ENCODE measurements at regions of chr20 and their contacts with region 1.

Region 1: GRCh38 chr20:61271312-61272221 is 19.5 kb downstream of the CDH4 start:
- DNase-seq: no peak
- ATAC-seq: no peak
- H3K4me3 ChIP-seq: no peak overlapping the region
- H3K4me3 Mint-ChIP-seq: no peak overlapping the region
- H3K27ac ChIP-seq: no peak overlapping the region
- H3K27ac Mint-ChIP-seq: no peak overlapping the region
- H3K4me1 ChIP-seq: no peaks in the 10 kb centered on the region
- H3K4me1 Mint-ChIP-seq: no peaks in the 10 kb centered on the region
- H3K27me3 ChIP-seq: no peaks in the 10 kb centered on the region
- H3K27me3 Mint-ChIP-seq: peaks cover 14% of the 10 kb centered on the region
- CTCF ChIP-seq: no peak

Region 2: DNA sequence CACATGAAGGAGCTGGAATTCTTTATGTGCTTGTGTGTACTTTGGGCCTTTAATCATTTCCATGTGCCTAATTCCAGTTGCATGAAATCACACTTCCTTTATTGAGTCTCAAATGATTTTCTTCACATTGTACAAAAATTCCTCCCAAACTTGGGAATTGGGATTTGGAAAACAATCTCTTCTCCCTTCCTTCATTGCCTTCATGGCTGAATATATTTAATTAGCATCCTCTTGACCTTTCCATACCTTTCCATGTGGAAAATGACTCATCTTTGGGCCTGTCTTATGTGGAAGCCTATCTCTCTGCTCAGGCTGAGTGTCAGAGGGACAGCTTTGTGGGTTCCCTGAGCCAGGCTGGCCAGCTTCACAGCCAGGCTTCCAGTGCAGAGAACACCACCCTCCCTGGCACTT is 52.5 kb before region 1 on chr20:
- CTCF ChIA-PET with region 1: no interaction called
- POLR2A ChIA-PET with region 1: no interaction called
- intact Hi-C with region 1: loop called in 1 of 2 experiments (anchors 10 kb)
- DNase-seq: no peak
- ATAC-seq: no peak
- H3K4me3 ChIP-seq: no peak overlapping the region
- H3K4me3 Mint-ChIP-seq: no peak overlapping the region
- H3K27ac ChIP-seq: no peak overlapping the region
- H3K27ac Mint-ChIP-seq: no peak overlapping the region
- H3K4me1 ChIP-seq: no peaks in the 10 kb centered on the region
- H3K4me1 Mint-ChIP-seq: no peaks in the 10 kb centered on the region
- H3K27me3 ChIP-seq: no peaks in the 10 kb centered on the region
- H3K27me3 Mint-ChIP-seq: peaks cover 5% of the 10 kb centered on the region
- CTCF ChIP-seq: no peak

Measured in CD4-positive, alpha-beta T cell (primary cell).